A673 (cell line): ENCODE measurements at regions of chr16 and their contacts with region 1.

Region 1: GRCh38 chr16:88527186-88527936 is 42.8 kb upstream of the ZC3H18 start:
- DNase-seq: peak; percentile 49
- H3K4me3 ChIP-seq: no peak overlapping the region
- H3K27ac ChIP-seq: no peak overlapping the region
- H3K4me1 ChIP-seq: peaks cover 14% of the 10 kb centered on the region
- H3K27me3 ChIP-seq: peaks cover 19% of the 10 kb centered on the region
- CTCF ChIP-seq: peak; percentile 79

Region 2: DNA sequence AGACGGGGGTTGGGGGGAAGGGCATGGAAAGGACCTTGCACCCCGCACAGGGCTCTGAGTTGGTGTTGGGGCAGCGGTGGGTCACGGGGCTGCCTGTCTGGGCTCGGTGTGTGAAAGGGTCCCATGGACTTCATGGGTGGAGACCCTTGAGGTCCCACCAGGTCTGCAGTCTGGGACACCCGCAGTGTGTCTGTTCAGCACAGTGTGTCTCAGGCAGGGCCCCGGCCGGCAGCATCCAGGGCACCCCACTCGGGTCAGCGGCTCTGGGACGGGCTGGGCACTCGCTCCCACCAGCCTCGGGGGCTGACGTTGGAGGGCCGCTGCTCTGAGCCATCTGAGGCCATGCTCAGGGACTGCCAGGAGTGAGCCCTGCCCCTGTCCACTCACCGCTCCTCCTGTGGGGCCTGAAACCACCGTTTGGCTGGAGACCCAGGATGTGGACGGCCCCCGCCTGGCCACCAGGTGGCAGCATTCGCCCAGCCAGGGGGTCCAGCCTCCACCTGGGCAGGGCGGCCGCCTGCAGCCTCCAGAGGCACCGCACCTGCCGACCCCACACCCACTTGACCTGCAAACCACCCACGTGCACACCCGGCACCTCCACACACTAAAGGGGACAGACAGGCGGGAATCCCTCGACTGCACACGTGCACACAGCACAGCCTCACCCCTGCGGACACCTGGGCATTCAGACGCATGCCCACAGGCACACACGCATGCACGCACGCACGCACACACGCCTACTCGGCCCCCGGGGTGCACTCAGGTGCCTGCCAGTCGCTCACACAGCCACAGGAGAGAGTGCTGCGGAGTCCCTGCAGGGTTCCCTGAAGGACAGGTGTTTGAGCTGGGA is 84.4 kb before region 1 on chr16:
- CTCF ChIA-PET with region 1: no interaction called
- POLR2A ChIA-PET with region 1: no interaction called
- intact Hi-C with region 1: loop called (anchors 1 kb)
- DNase-seq: peak; percentile 67
- H3K4me3 ChIP-seq: no peak overlapping the region
- H3K27ac ChIP-seq: no peak overlapping the region
- H3K4me1 ChIP-seq: peaks cover under 1% of the 10 kb centered on the region
- H3K27me3 ChIP-seq: no peaks in the 10 kb centered on the region
- CTCF ChIP-seq: peak; percentile 91